ENCODE measurements at regions of chr9 and their contacts with region 1.

Region 1: GRCh38 chr9:124940693-124941453 is at the start of gene GOLGA1:
- DNase-seq: peak; percentile 97
- H3K4me3 ChIP-seq: peak within 1 kb of the TSS; percentile 73 to 98 (median 77)
- H3K27ac ChIP-seq: peak within 1 kb of the TSS; percentile 98
- H3K4me1 ChIP-seq: peaks cover 13% of the 10 kb centered on the region
- H3K27me3 ChIP-seq: no peaks in the 10 kb centered on the region
- CTCF ChIP-seq: no peak
- POLR2A ChIP-seq: peak; percentile 93
- total RNA-seq, gene GOLGA1: 14.7 and 19.9 TPM in 2 replicates

Region 2: GRCh38 chr9:124658165-124659017 is 282.5 kb before region 1 on chr9:
- CTCF ChIA-PET with region 1: no interaction called
- POLR2A ChIA-PET with region 1: no interaction called
- dilution Hi-C with region 1: no loop called
- intact Hi-C with region 1: loop called (anchors 5 kb)
- DNase-seq: peak; percentile 95
- H3K4me3 ChIP-seq: peak overlapping the region; percentile 53 to 100 (median 99)
- H3K27ac ChIP-seq: peak overlapping the region; percentile 98
- H3K4me1 ChIP-seq: peaks cover 33% of the 10 kb centered on the region
- H3K27me3 ChIP-seq: no peaks in the 10 kb centered on the region
- CTCF ChIP-seq: no peak
- POLR2A ChIP-seq: peak; percentile 99

Region 3: GRCh38 chr9:124754289-124754688 is 186.6 kb before region 1 on chr9:
- CTCF ChIA-PET with region 1: no interaction called
- POLR2A ChIA-PET with region 1: no interaction called
- dilution Hi-C with region 1: no loop called
- intact Hi-C with region 1: no loop called
- DNase-seq: peak; percentile 33
- H3K4me3 ChIP-seq: no peak overlapping the region
- H3K27ac ChIP-seq: no peak overlapping the region
- H3K4me1 ChIP-seq: no peaks in the 10 kb centered on the region
- H3K27me3 ChIP-seq: peaks cover 30 to 52% of the 10 kb centered on the region in 2 experiments
- CTCF ChIP-seq: peak in 1 of 2 donors; percentile 34
- POLR2A ChIP-seq: no peak

Region 4: DNA sequence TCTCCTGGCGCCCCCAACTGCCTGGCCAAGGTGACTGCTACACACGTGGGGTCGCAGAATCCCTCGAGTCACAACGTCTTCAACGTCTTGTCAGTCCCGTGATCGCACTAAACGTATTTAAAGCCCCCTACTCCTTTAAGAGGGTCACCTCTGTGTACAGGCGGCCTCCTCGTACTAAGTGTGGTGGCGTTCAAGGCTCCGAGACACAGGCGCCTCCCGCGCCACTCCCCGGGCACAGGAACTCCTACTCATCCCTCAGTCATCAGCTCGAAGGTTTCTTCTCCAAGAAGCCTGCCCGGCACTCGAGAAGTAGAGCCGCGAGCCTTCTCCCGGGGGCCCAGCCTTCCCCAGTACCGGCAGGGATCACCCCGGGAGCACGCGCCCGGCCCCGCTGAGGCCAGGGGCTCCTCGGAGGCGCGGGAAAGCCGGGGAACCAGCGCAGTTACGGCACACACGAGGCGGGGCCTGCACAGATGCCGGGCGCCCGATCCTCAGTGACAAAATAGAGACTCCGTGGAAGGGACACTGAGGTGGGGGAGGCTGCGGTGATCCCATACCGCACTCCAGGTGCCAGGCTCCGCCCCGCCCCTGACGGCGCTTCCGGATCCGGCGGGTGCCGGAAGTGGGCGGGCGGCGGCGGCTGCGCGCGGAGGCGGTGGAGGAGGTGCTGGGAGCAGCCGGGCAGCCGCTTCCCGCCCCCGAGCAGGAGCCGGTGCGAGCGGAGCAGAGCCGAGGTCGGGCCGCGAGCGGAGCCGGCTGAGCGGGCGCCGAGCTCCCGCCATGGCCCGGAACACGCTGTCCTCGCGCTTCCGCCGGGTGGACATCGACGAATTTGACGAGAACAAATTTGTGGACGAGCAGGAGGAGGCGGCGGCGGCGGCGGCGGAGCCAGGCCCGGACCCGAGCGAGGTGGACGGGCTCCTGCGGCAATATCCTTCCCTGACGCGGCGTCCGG is 72.1 kb before region 1 on chr9:
- CTCF ChIA-PET with region 1: no interaction called
- POLR2A ChIA-PET with region 1: interaction called, 4 read pairs
- dilution Hi-C with region 1: no loop called
- intact Hi-C with region 1: loop called (anchors 1 kb)
- DNase-seq: peak; percentile 82
- H3K4me3 ChIP-seq: peak overlapping the region; percentile 31 to 97 (median 79)
- H3K27ac ChIP-seq: peak overlapping the region; percentile 75
- H3K4me1 ChIP-seq: peaks cover 35% of the 10 kb centered on the region
- H3K27me3 ChIP-seq: no peaks in the 10 kb centered on the region
- CTCF ChIP-seq: no peak
- POLR2A ChIP-seq: peak; percentile 92

Region 5: GRCh38 chr9:125143375-125144090 is 202.7 kb after region 1 on chr9 and contains the start of gene SCAI:
- CTCF ChIA-PET with region 1: interaction called, 4 read pairs
- POLR2A ChIA-PET with region 1: interaction called, 3 read pairs
- dilution Hi-C with region 1: no loop called
- intact Hi-C with region 1: loop called (anchors 1 kb)
- DNase-seq: peak; percentile 99
- H3K4me3 ChIP-seq: peak within 1 kb of the TSS; percentile 19 to 74 (median 59)
- H3K27ac ChIP-seq: no peak within 1 kb of the TSS
- H3K4me1 ChIP-seq: peaks cover 6% of the 10 kb centered on the region
- H3K27me3 ChIP-seq: no peaks in the 10 kb centered on the region
- CTCF ChIP-seq: peak; percentile 94 to 99
- POLR2A ChIP-seq: peak; percentile 71
- total RNA-seq, gene SCAI: 6.9 and 9.3 TPM in 2 replicates

Region 6: GRCh38 chr9:125200210-125201047 is 259.6 kb after region 1 on chr9 and contains the start of gene RABEPK:
- CTCF ChIA-PET with region 1: no interaction called
- POLR2A ChIA-PET with region 1: no interaction called
- dilution Hi-C with region 1: no loop called
- intact Hi-C with region 1: loop called (anchors 5 kb)
- DNase-seq: peak; percentile 94
- H3K4me3 ChIP-seq: peak within 1 kb of the TSS; percentile 78 to 91 (median 80)
- H3K27ac ChIP-seq: peak within 1 kb of the TSS; percentile 81
- H3K4me1 ChIP-seq: peaks cover 6% of the 10 kb centered on the region
- H3K27me3 ChIP-seq: peaks cover 2 to 3% of the 10 kb centered on the region in 2 experiments
- CTCF ChIP-seq: no peak
- POLR2A ChIP-seq: peak; percentile 93
- total RNA-seq, gene RABEPK: 18.2 and 19.1 TPM in 2 replicates

Region 7: GRCh38 chr9:125241000-125241862 is 300.4 kb after region 1 on chr9 and contains the start of gene HSPA5:
- CTCF ChIA-PET with region 1: no interaction called
- POLR2A ChIA-PET with region 1: no interaction called
- dilution Hi-C with region 1: no loop called
- intact Hi-C with region 1: loop called (anchors 5 kb)
- DNase-seq: peak; percentile 100
- H3K4me3 ChIP-seq: peak within 1 kb of the TSS; percentile 77 to 97 (median 96)
- H3K27ac ChIP-seq: peak within 1 kb of the TSS; percentile 89
- H3K4me1 ChIP-seq: peaks cover 43% of the 10 kb centered on the region
- H3K27me3 ChIP-seq: no peaks in the 10 kb centered on the region
- CTCF ChIP-seq: peak in 1 of 2 donors; percentile 22
- POLR2A ChIP-seq: peak; percentile 100
- total RNA-seq, gene HSPA5: 514 and 538 TPM in 2 replicates

Measured in endothelial cell of umbilical vein (primary cell).